Activated B cell treated with CpG ODN at 0.5 μM for 24 hours (primary cell): ENCODE measurements at regions of chr2 and their contacts with region 1.

Region 1: GRCh38 chr2:142980561-142981378 is 103.3 kb downstream of the KYNU start:
- DNase-seq: no peak
- ATAC-seq: no peak
- H3K4me3 Mint-ChIP-seq: no peak overlapping the region
- H3K27ac Mint-ChIP-seq: peak overlapping the region; percentile 74
- H3K4me1 Mint-ChIP-seq: peaks cover 35% of the 10 kb centered on the region
- H3K27me3 Mint-ChIP-seq: no peaks in the 10 kb centered on the region
- CTCF ChIP-seq: no peak

Region 2: GRCh38 chr2:141280037-141280436 is 1700.7 kb before region 1 on chr2:
- CTCF ChIA-PET with region 1: no interaction called
- POLR2A ChIA-PET with region 1: no interaction called
- intact Hi-C with region 1: no loop called
- DNase-seq: no peak
- ATAC-seq: no peak
- H3K4me3 Mint-ChIP-seq: no peak overlapping the region
- H3K27ac Mint-ChIP-seq: no peak overlapping the region
- H3K4me1 Mint-ChIP-seq: peaks cover 3% of the 10 kb centered on the region
- H3K27me3 Mint-ChIP-seq: no peaks in the 10 kb centered on the region
- CTCF ChIP-seq: no peak

Region 3: GRCh38 chr2:142286606-142287005 is 694.2 kb before region 1 on chr2:
- CTCF ChIA-PET with region 1: no interaction called
- POLR2A ChIA-PET with region 1: no interaction called
- intact Hi-C with region 1: loop called (anchors 1 kb)
- DNase-seq: no peak
- ATAC-seq: no peak
- H3K4me3 Mint-ChIP-seq: no peak overlapping the region
- H3K27ac Mint-ChIP-seq: no peak overlapping the region
- H3K4me1 Mint-ChIP-seq: no peaks in the 10 kb centered on the region
- H3K27me3 Mint-ChIP-seq: no peaks in the 10 kb centered on the region
- CTCF ChIP-seq: no peak

Region 4: GRCh38 chr2:142642654-142643053 is 338.1 kb before region 1 on chr2:
- CTCF ChIA-PET with region 1: no interaction called
- POLR2A ChIA-PET with region 1: no interaction called
- intact Hi-C with region 1: loop called (anchors 2 kb)
- DNase-seq: no peak
- ATAC-seq: no peak
- H3K4me3 Mint-ChIP-seq: no peak overlapping the region
- H3K27ac Mint-ChIP-seq: no peak overlapping the region
- H3K4me1 Mint-ChIP-seq: no peaks in the 10 kb centered on the region
- H3K27me3 Mint-ChIP-seq: no peaks in the 10 kb centered on the region
- CTCF ChIP-seq: no peak

Region 5: DNA sequence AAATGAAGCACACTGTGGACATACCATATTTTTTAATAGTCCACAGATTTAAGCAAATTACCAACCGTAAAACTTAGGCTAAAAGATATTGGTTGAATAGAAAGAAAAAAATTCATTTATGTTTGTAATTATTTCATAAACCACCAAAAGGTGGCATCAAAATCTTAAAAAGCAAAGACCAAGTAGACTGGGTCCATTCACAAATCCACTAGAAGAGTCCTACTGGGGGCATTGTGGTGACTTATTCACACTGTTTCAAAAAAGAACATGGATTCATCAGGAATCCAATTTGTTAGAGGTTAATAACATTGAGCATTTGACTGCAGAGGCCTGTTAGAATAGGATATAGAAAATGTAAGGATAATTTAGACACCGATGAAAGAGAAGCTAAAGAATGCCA is 298.2 kb before region 1 on chr2:
- CTCF ChIA-PET with region 1: interaction called, 32 read pairs
- POLR2A ChIA-PET with region 1: no interaction called
- intact Hi-C with region 1: loop called (anchors 1 kb)
- DNase-seq: no peak
- ATAC-seq: no peak
- H3K4me3 Mint-ChIP-seq: no peak overlapping the region
- H3K27ac Mint-ChIP-seq: no peak overlapping the region
- H3K4me1 Mint-ChIP-seq: no peaks in the 10 kb centered on the region
- H3K27me3 Mint-ChIP-seq: peaks cover 9% of the 10 kb centered on the region
- CTCF ChIP-seq: no peak

Region 6: DNA sequence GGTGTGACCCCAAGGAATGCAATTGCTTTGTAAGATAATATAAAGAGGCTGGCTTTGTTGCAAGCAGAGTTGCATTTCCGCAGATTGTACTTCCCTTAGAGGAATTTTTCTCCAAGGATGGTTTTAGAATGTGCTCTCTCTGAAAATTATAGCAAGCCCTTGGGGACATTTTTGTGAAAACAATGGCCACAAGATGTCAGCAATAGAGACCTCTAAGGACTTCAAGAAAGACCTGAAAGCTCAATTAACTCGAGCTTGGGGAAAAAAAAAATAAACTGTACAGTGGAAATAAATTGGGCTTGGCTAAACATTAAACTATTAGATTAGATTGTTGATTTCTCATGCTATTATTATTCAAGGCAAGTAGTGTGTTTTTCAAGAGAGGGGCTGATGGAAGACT is 184.6 kb before region 1 on chr2:
- CTCF ChIA-PET with region 1: interaction called, 33 read pairs
- POLR2A ChIA-PET with region 1: no interaction called
- intact Hi-C with region 1: loop called (anchors 1 kb)
- DNase-seq: no peak
- ATAC-seq: no peak
- H3K4me3 Mint-ChIP-seq: no peak overlapping the region
- H3K27ac Mint-ChIP-seq: no peak overlapping the region
- H3K4me1 Mint-ChIP-seq: peaks cover 6% of the 10 kb centered on the region
- H3K27me3 Mint-ChIP-seq: no peaks in the 10 kb centered on the region
- CTCF ChIP-seq: no peak